PC-9 (cell line): ENCODE measurements at regions of chr5 and their contacts with region 1.

Region 1: GRCh38 chr5:74865804-74866595 is at the start of gene FAM169A:
- DNase-seq: peak; percentile 41 to 68
- H3K4me3 ChIP-seq: peak within 1 kb of the TSS; percentile 95
- H3K27ac ChIP-seq: no peak within 1 kb of the TSS
- H3K4me1 ChIP-seq: peaks cover 9% of the 10 kb centered on the region
- H3K27me3 ChIP-seq: no peaks in the 10 kb centered on the region
- CTCF ChIP-seq: no peak
- total RNA-seq, gene FAM169A: 2.1 and 3.9 TPM in 2 replicates

Region 2: DNA sequence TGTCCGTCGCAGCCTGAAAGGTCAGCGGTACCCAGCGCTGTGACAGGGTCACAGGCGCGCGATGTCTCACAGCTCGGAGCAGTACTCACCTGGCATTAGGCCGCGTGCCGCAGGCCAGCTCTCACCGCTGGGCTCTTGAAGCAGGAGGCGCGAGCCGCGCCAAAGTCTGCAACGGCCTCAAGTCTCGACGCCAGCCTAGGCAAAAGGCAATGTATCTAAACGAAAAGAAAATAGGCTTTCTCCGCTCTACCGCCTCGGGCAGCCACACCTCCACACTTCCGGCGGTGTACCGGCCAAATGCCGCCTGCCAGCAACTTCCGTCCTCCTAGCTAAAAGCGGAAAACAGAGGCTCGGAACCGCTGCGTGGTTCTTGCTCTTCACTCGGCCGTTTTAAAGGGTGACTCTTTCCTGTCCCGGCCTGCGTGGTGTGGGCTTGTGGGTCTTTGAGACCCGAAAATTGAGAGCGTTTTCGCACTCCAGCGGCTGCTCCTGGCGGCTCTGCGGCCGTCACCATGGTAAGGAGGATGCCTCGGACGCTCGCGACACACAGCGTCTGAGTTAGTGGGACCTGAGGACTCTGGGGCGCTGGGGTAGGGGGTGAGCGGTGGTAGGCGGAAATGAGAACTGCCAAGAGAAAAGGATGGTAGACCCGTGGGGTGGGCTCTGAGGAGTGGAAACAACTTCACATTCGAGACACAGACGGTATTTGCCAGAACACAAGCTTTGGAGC is 99.0 kb before region 1 on chr5 and contains the starts of genes GFM2 and NSA2:
- CTCF ChIA-PET with region 1: no interaction called
- POLR2A ChIA-PET with region 1: no interaction called
- intact Hi-C with region 1: loop called (anchors 10 kb)
- DNase-seq: peak; percentile 83 to 88
- H3K4me3 ChIP-seq: peak within 1 kb of the TSS; percentile 83
- H3K27ac ChIP-seq: peak within 1 kb of the TSS; percentile 58
- H3K4me1 ChIP-seq: peaks cover 44% of the 10 kb centered on the region
- H3K27me3 ChIP-seq: no peaks in the 10 kb centered on the region
- CTCF ChIP-seq: no peak; the same call in 1 of the 2 replicates
- total RNA-seq, gene GFM2: 38.5 and 39.8 TPM in 2 replicates
- total RNA-seq, gene NSA2: 47.3 and 87.1 TPM in 2 replicates